CD4-positive, alpha-beta memory T cell (primary cell): ENCODE measurements at regions of chrX and their contacts with region 1.

Region 1: GRCh38 chrX:47836164-47837072 is at the start of gene ZNF81:
- DNase-seq: peak; percentile 86 to 95 (median 88)
- H3K4me3 ChIP-seq: peak within 1 kb of the TSS; percentile 78 to 84
- H3K4me3 Mint-ChIP-seq: peak within 1 kb of the TSS; percentile 92 to 98 (median 97)
- H3K27ac ChIP-seq: peak within 1 kb of the TSS; percentile 62
- H3K27ac Mint-ChIP-seq: peak within 1 kb of the TSS; percentile 92 to 99 (median 98)
- H3K4me1 ChIP-seq: peaks cover 16% of the 10 kb centered on the region
- H3K4me1 Mint-ChIP-seq: peaks cover 6 to 24% (median 13%) of the 10 kb centered on the region in 4 donors
- H3K27me3 ChIP-seq: no peaks in the 10 kb centered on the region
- H3K27me3 Mint-ChIP-seq: no peaks in the 10 kb centered on the region
- total RNA-seq, gene ZNF81: 9.9 to 11.5 TPM

Region 2: GRCh38 chrX:46865281-46865680 is 971.1 kb before region 1 on chrX:
- CTCF ChIA-PET with region 1: no interaction called
- POLR2A ChIA-PET with region 1: no interaction called
- intact Hi-C with region 1: no loop called
- DNase-seq: no peak
- H3K4me3 ChIP-seq: no peak overlapping the region
- H3K4me3 Mint-ChIP-seq: no peak overlapping the region
- H3K27ac ChIP-seq: no peak overlapping the region
- H3K27ac Mint-ChIP-seq: no peak overlapping the region
- H3K4me1 ChIP-seq: no peaks in the 10 kb centered on the region
- H3K4me1 Mint-ChIP-seq: peaks cover 0 to 1% (median 0%) of the 10 kb centered on the region in 4 donors
- H3K27me3 ChIP-seq: no peaks in the 10 kb centered on the region
- H3K27me3 Mint-ChIP-seq: no peaks in the 10 kb centered on the region

Region 3: DNA sequence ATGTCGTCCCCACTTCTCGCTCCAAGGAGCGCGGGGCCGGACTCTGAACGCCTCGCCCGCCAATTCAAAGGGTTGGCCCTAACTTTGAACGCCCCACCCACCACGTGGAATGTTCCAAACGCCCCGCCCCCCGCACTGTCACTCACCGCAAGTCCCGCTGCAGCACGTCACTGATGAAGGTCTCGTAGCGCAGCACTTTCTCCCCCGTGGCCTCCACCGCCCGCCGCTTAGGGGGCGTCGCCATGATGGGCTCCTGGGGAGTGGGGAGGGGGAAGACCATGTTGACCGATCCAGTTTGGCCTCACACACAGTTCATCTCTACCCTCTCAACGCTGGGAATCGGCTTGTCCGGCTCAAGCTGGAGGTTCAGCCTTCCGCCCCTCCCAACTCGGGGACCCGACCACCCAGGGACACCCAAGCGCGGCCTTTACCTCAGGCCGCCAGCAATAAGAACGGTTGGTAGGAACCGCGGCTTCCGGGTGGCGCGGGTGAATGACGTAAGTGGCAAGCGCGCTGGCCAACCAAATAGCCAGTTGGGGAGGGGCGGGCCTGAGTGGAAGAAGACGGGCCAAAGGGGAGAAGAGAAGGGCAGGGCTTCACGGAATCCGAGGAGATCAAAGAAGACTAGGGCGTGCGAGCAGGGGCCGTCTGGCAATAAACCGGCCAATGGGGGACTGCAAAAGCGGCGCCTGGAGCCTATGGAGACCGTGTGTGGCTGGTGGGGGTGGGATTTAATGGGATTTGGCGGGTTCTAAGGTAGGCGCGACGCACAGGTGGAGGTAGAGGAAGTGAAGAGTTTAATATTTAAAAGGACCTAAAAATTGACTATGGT is 177.5 kb before region 1 on chrX and contains the start of gene UXT:
- CTCF ChIA-PET with region 1: no interaction called
- POLR2A ChIA-PET with region 1: interaction called, 3 read pairs
- intact Hi-C with region 1: loop called (anchors 5 kb)
- DNase-seq: peak; percentile 89 to 96 (median 93)
- H3K4me3 ChIP-seq: peak within 1 kb of the TSS; percentile 61 to 90
- H3K4me3 Mint-ChIP-seq: peak within 1 kb of the TSS; percentile 87 to 93 (median 91)
- H3K27ac ChIP-seq: peak within 1 kb of the TSS; percentile 95
- H3K27ac Mint-ChIP-seq: peak within 1 kb of the TSS; percentile 96 to 99 (median 98)
- H3K4me1 ChIP-seq: peaks cover 16% of the 10 kb centered on the region
- H3K4me1 Mint-ChIP-seq: peaks cover 3 to 28% (median 8%) of the 10 kb centered on the region in 4 donors
- H3K27me3 ChIP-seq: no peaks in the 10 kb centered on the region
- H3K27me3 Mint-ChIP-seq: no peaks in the 10 kb centered on the region
- total RNA-seq, gene UXT: 172 to 188 TPM

Region 4: GRCh38 chrX:47873123-47873522 is 36.7 kb after region 1 on chrX:
- CTCF ChIA-PET with region 1: no interaction called
- POLR2A ChIA-PET with region 1: no interaction called
- intact Hi-C with region 1: no loop called
- DNase-seq: no peak
- H3K4me3 ChIP-seq: no peak overlapping the region
- H3K4me3 Mint-ChIP-seq: no peak overlapping the region
- H3K27ac ChIP-seq: no peak overlapping the region
- H3K27ac Mint-ChIP-seq: no peak overlapping the region
- H3K4me1 ChIP-seq: no peaks in the 10 kb centered on the region
- H3K4me1 Mint-ChIP-seq: peaks cover 0 to 2% (median under 1%) of the 10 kb centered on the region in 4 donors
- H3K27me3 ChIP-seq: no peaks in the 10 kb centered on the region
- H3K27me3 Mint-ChIP-seq: no peaks in the 10 kb centered on the region

Region 5: DNA sequence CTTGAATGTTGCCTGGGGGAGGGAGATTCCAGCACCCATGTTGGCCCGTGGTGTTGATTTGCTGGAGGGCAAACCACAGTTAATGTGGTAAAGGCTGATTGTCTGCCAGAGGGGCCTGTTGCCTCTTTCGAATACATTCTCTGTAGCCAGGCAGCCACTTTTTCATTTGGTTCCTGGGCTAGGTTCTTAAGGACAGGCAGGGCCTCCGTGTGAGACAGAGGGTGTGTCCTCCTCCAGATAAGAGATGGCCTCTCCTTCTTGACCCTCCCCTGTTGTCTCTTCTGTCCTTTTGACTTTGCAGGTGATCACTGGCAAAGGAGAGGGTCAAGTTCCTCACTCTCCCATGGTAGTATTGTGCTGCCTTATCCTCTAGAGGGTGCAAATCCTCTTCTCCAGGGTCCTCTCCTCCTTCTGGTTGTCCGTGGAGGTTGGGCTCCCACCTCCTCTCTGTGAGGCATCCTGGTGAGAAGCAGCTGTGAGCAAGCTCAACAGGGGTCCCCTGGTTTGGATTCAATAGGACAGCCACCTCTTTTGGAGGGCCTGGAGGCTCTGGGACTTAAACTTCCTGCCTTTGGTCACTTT is 122.4 kb after region 1 on chrX:
- CTCF ChIA-PET with region 1: no interaction called
- POLR2A ChIA-PET with region 1: no interaction called
- intact Hi-C with region 1: loop called (anchors 2 kb)
- DNase-seq: peak in 4 of 5 donors; percentile 15 to 31 (median 23)
- H3K4me3 ChIP-seq: no peak overlapping the region
- H3K4me3 Mint-ChIP-seq: no peak overlapping the region
- H3K27ac ChIP-seq: no peak overlapping the region
- H3K27ac Mint-ChIP-seq: peak overlapping the region in 1 of 7 donors; percentile 69
- H3K4me1 ChIP-seq: no peaks in the 10 kb centered on the region
- H3K4me1 Mint-ChIP-seq: no peaks in the 10 kb centered on the region
- H3K27me3 ChIP-seq: no peaks in the 10 kb centered on the region
- H3K27me3 Mint-ChIP-seq: no peaks in the 10 kb centered on the region

Region 6: DNA sequence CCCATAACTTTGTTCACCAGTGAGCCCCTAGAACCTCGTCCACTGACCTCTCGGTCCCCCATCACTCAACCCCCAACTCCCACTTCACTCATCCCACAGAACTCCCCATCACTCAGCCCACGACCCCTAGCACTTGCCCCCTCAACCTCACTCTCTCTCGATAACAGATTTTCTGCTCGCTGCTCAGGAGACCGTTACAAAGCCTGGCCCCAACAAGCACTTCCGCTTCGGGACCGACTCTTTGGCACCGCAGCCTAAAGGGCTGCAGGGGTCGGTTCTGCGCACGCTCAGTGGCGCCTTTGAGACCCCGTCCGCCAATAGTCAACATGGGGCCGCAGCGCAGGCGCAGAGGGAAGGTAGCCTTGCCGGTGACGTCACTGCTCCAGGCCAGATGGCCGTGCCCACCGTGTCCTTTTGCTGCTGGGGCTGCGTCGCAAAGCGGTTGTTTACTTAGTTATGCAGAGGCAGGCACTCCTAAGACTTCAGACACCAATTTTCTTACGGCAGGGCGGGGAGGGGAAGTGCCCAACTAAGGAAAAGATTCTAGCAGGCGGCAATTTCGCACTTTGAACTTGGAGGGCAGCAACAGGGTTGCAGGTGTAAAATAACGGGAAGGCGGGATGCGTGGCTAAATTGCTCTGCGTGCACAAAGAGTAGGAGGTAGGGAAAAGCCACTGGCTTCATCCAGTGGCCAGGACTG is 167.5 kb after region 1 on chrX and contains the start of gene ZNF182:
- CTCF ChIA-PET with region 1: no interaction called
- POLR2A ChIA-PET with region 1: interaction called, 3 read pairs
- intact Hi-C with region 1: loop called (anchors 5 kb)
- DNase-seq: peak; percentile 87 to 94 (median 91)
- H3K4me3 ChIP-seq: peak within 1 kb of the TSS; percentile 39 to 55
- H3K4me3 Mint-ChIP-seq: peak within 1 kb of the TSS; percentile 91 to 99 (median 94)
- H3K27ac ChIP-seq: peak within 1 kb of the TSS; percentile 74
- H3K27ac Mint-ChIP-seq: peak within 1 kb of the TSS; percentile 88 to 99 (median 97)
- H3K4me1 ChIP-seq: peaks cover 20% of the 10 kb centered on the region
- H3K4me1 Mint-ChIP-seq: peaks cover 16 to 29% (median 22%) of the 10 kb centered on the region in 4 donors
- H3K27me3 ChIP-seq: no peaks in the 10 kb centered on the region
- H3K27me3 Mint-ChIP-seq: no peaks in the 10 kb centered on the region
- total RNA-seq, gene ZNF182: 13.2 to 13.3 TPM

Region 7: GRCh38 chrX:48028091-48028490 is 191.7 kb after region 1 on chrX:
- CTCF ChIA-PET with region 1: interaction called, 25 read pairs
- POLR2A ChIA-PET with region 1: interaction called, 5 read pairs
- intact Hi-C with region 1: loop called (anchors 1 kb)
- DNase-seq: no peak
- H3K4me3 ChIP-seq: no peak overlapping the region
- H3K4me3 Mint-ChIP-seq: no peak overlapping the region
- H3K27ac ChIP-seq: no peak overlapping the region
- H3K27ac Mint-ChIP-seq: no peak overlapping the region
- H3K4me1 ChIP-seq: no peaks in the 10 kb centered on the region
- H3K4me1 Mint-ChIP-seq: peaks cover 4 to 12% (median 8%) of the 10 kb centered on the region in 4 donors
- H3K27me3 ChIP-seq: no peaks in the 10 kb centered on the region
- H3K27me3 Mint-ChIP-seq: no peaks in the 10 kb centered on the region